Activated CD4-positive, alpha-beta T cell treated with anti-CD3 and anti-CD28 coated beads for 36 hours (primary cell): ENCODE measurements at regions of chr22 and their contacts with region 1.

Region 1: GRCh38 chr22:19341500-19341899 is 50.0 kb upstream of the CLTCL1 start:
- DNase-seq: no peak
- ATAC-seq: no peak
- H3K4me3 Mint-ChIP-seq: no peak overlapping the region
- H3K27ac Mint-ChIP-seq: no peak overlapping the region
- H3K4me1 Mint-ChIP-seq: no peaks in the 10 kb centered on the region
- H3K27me3 Mint-ChIP-seq: no peaks in the 10 kb centered on the region

Region 2: DNA sequence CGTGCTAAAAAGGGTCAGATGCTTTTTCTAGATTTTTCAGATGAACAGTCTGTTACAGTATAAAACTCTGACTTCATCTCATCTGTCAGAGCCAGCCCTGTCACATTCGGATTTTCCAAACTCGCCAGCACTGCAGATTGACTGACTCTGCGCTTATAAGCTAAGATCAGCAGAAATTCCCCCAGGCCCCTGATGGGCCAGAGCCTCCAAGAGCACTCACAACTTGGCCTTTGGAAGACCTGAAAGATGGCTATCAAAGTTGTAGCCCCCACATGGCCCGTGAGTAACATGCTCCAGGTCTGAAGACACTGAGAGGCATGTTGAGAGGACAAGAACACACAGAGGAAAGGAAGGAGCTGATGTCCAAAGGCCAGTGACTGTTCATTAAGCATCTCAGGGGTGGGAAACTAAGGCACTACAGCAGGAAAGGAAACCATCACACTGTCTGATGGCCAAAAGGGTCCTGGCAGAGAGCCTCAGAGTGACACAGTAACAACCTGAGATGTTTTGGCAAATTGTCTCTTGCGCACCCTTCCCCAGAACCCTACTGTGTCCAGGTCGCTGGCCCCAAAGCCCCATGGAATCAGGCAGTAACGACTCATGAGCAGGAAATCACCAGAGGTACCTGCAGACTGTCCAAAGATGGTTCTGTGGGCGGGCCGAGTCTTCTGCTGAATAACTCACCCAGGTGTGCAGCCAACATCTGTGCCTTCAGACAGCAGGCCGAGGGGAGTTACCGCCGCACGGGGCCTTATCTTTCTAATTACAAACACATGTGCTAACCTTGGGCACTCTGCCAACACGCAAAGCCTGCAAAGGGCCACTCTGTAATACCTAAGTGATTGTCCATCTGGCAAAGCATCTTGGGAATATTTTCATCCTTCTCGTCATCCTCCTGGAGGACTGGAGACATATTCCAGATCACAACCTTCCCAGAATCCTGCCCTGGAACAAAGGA is 66.4 kb after region 1 on chr22:
- CTCF ChIA-PET with region 1: no interaction called
- POLR2A ChIA-PET with region 1: no interaction called
- intact Hi-C with region 1: loop called in 1 of 2 experiments (anchors 10 kb)
- DNase-seq: no peak
- ATAC-seq: no peak
- H3K4me3 Mint-ChIP-seq: no peak overlapping the region
- H3K27ac Mint-ChIP-seq: no peak overlapping the region
- H3K4me1 Mint-ChIP-seq: peaks cover 4% of the 10 kb centered on the region
- H3K27me3 Mint-ChIP-seq: no peaks in the 10 kb centered on the region